ENCODE measurements at regions of chr3 and their contacts with region 1.

Region 1: DNA sequence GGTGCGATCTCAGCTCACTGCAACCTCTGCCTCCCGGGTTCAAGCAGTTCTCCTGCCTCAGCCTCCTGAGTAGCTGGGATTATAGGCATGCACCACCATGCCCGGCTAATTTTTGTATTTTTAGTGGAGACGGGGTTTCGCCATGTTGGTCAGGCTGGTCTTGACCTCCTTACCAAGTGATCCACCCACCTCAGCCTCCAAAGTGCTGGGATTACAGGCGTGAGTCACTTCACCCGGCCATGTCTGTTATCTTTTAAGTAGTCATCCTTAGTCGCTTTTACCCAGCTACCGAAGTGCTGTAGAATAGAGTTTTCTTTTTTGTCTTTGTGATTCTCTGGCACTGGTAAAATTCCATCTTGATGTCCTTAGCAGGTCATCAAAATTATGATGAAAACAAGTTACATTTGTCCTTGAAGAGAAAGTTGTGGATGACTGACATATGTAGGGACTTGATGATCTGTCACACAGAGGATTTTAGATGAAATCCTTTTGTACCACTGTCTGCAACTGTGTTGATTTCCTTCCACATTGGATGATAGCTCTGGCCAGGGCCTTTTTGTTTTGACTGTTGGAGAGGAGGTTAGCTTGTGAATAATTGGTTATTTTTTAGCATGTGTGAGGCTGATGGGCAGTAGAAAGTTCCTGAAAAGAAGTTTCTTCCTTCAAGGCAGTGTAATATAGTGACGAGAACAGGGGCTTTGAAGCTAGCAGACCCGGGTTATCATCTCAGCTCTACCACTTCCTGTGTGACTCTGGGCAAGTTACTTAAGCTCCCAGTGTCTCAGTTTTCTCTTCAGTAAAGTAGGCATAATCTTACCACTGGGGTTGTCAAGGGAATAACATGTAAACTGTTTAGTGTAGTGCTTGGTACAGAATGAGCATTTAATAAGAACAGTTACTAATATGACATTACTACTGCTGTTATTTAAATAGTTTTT is 18.8 kb downstream of the ATG7 start:
- DNase-seq: peak; percentile 23
- H3K4me3 Mint-ChIP-seq: peak overlapping the region; percentile 29
- H3K27ac Mint-ChIP-seq: peak overlapping the region; percentile 83
- H3K4me1 Mint-ChIP-seq: peaks cover 52% of the 10 kb centered on the region
- H3K27me3 Mint-ChIP-seq: no peaks in the 10 kb centered on the region

Region 2: DNA sequence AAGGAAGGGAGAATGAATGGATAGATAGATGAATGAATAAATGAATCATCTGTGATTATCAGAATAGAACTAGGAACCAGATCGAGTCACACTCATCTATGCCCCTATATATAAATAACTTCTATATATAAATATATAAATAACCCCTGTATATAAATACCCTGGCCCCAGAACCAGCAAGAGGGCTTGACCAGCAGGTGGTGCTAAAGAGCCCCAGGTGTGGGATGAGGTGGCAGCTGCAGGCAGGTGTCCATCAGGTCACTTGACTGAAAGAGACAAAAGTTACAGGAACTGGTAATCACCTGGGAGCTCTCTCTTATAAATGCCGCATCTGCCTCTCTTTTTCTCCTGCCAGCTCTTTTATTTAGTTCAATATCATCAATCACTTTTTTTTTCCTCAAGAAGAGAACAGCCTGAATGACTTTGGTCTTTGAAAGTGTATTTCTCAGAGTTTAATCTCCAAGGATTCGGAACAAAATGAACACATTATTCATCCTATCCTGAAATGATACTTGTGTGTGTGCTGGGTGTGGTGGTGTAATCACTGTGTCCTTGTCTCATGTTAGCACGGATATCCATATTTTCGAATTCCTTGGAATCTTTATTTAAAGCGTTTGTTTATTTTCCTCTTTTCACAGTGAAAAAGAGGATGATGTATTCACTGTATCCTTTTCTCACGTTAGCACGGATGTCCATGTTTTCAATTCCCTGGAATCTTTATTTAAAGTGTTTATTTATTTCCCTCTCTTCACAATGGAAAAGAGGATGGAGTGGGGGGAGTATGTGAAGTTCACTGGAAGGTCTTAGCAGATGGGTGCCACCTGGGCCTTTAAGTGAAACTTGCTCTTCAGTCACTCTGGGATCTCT is 54.2 kb before region 1 on chr3:
- intact Hi-C with region 1: loop called (anchors 1 kb)
- DNase-seq: peak; percentile 62
- H3K4me3 Mint-ChIP-seq: no peak overlapping the region
- H3K27ac Mint-ChIP-seq: no peak overlapping the region
- H3K4me1 Mint-ChIP-seq: peaks cover 27% of the 10 kb centered on the region
- H3K27me3 Mint-ChIP-seq: peaks cover 22% of the 10 kb centered on the region

Region 3: GRCh38 chr3:11260460-11260859 is 30.6 kb before region 1 on chr3:
- intact Hi-C with region 1: no loop called
- DNase-seq: no peak
- H3K4me3 Mint-ChIP-seq: no peak overlapping the region
- H3K27ac Mint-ChIP-seq: no peak overlapping the region
- H3K4me1 Mint-ChIP-seq: no peaks in the 10 kb centered on the region
- H3K27me3 Mint-ChIP-seq: peaks cover 14% of the 10 kb centered on the region

Region 4: DNA sequence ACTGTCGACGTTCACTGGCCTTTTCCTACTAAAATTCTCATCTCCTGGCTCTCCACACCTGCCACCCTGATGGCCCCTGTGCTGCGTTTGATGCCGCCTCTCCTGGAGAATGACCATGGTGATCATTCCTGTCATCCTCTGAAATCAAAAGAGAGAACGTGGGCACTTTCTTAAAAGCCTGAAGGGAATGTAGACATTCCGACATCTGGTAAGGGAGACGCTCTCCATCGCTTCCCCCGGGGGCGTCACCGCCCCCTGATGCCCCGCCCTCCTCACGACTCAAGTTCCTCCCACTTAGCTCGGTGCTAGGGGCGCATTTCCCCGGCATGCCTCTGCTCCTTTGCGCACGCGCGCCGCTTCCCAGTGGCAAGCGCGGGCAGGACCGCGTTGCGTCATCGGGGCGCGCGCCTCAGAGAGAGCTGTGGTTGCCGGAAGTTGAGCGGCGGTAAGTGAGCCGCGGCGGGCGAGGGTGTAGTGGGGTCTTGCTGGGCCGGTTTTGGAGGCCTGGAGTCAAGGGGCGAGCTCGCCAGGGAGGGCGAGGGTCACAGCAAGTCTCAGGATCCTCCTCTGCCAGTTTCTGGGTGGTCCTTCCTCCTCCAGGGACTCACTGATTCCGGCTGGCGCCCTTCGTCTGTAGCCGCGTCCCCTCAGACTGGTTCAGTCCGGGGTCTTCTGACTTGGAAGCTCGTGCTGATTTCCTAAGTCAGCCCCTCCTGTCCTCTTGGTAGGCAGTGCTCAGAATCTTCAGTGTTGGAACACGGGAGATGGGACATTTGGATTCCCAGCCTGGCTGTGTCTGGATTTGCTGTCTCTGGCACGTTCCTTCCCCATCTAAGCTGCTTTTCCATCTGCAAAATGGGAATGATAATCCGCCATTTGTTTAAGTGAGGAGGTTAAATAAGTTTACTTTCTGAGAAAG is 18.8 kb before region 1 on chr3 and contains the start of gene ATG7:
- intact Hi-C with region 1: loop called (anchors 1 kb)
- DNase-seq: peak; percentile 96
- H3K4me3 Mint-ChIP-seq: peak within 1 kb of the TSS; percentile 90
- H3K27ac Mint-ChIP-seq: peak within 1 kb of the TSS; percentile 90
- H3K4me1 Mint-ChIP-seq: peaks cover 45% of the 10 kb centered on the region
- H3K27me3 Mint-ChIP-seq: peaks cover 3% of the 10 kb centered on the region
- total RNA-seq, gene ATG7: 38.6 and 44.0 TPM in 2 replicates

Region 5: GRCh38 chr3:11306817-11307589 is 16.0 kb after region 1 on chr3:
- intact Hi-C with region 1: loop called (anchors 2 kb)
- DNase-seq: peak; percentile 8
- H3K4me3 Mint-ChIP-seq: peak overlapping the region; percentile 32
- H3K27ac Mint-ChIP-seq: peak overlapping the region; percentile 46
- H3K4me1 Mint-ChIP-seq: peaks cover 32% of the 10 kb centered on the region
- H3K27me3 Mint-ChIP-seq: no peaks in the 10 kb centered on the region

Measured in activated T-helper 1 cell treated with anti-CD3 and anti-CD28 coated beads, Interleukin-12 subunit alpha, Interleukin-12 subunit beta, Interleukin-2, Interleukin-4 antibody, amounts not matched to agents 30 ng/mL and 10 ng/mL and 1 ng/mL, durations not matched to agents 14 hours and 24 hours and 36 hours (primary cell).